ENCODE measurements at regions of chr16 and their contacts with region 1.

Region 1: DNA sequence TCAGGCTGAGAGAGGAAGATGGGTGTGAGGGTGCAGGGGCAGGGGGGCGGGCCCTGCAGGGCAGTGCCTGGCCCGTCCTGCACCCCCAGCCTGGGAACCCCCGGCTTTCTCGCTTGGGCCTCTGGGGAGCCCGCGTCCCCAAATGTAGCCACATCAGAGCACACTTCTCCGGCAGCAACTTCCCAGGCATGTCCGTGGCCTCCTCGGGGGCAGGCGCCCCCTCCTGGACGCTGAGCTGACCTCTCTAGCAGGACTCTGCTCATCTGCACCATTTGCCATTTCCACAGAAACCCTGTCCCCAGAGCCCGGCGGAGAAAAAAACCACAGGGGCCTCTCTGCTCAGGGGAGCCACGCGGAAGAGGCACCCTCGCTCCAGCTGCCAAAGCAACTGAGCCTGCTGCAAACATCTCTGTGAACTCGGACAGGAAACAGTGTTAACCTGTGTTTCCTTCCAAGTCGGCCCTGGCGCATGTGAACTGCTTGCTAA is 63.4 kb downstream of the KLHDC4 start:
- DNase-seq: peak; percentile 93
- H3K4me3 ChIP-seq: peak overlapping the region; percentile 36
- H3K27ac ChIP-seq: peak overlapping the region; percentile 99
- H3K4me1 ChIP-seq: peaks cover 68% of the 10 kb centered on the region
- CTCF ChIP-seq: peak; percentile 83

Region 2: GRCh38 chr16:87387942-87388817 is 314.2 kb before region 1 on chr16:
- CTCF ChIA-PET with region 1: no interaction called
- POLR2A ChIA-PET with region 1: no interaction called
- intact Hi-C with region 1: loop called (anchors 5 kb)
- DNase-seq: peak; percentile 97
- H3K4me3 ChIP-seq: peak overlapping the region; percentile 51
- H3K27ac ChIP-seq: peak overlapping the region; percentile 85
- H3K4me1 ChIP-seq: peaks cover 44% of the 10 kb centered on the region
- CTCF ChIP-seq: no peak

Region 3: DNA sequence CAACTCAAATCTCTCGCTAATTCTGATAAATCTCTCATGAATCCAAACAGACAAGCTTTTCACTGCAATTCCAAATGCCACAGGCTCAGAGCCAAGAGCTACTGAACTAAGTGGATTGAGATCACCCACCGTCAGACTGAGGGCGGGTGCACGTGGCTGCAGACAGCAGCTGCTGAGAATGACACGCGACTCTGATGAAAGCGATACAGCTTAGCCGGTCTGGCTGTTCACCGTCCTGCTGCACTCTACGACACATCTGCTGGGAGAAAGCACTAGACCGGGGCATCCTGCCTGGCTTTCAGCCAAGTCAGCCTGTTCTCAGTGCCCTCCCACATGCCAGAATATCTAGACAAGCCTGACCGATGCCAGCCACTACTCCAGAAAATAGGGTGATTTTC is 20.9 kb after region 1 on chr16:
- CTCF ChIA-PET with region 1: interaction called, 8 read pairs
- POLR2A ChIA-PET with region 1: interaction called, 12 read pairs
- intact Hi-C with region 1: loop called (anchors 1 kb)
- DNase-seq: peak; percentile 97
- H3K4me3 ChIP-seq: peak overlapping the region; percentile 30
- H3K27ac ChIP-seq: peak overlapping the region; percentile 94
- H3K4me1 ChIP-seq: peaks cover 55% of the 10 kb centered on the region
- CTCF ChIP-seq: no peak

Region 4: GRCh38 chr16:87765776-87766484 is 63.6 kb after region 1 on chr16 and contains the start of gene KLHDC4:
- CTCF ChIA-PET with region 1: no interaction called
- POLR2A ChIA-PET with region 1: interaction called, 6 read pairs
- intact Hi-C with region 1: loop called (anchors 2 kb)
- DNase-seq: peak; percentile 91
- H3K4me3 ChIP-seq: peak within 1 kb of the TSS; percentile 86
- H3K27ac ChIP-seq: peak within 1 kb of the TSS; percentile 75
- H3K4me1 ChIP-seq: peaks cover 62% of the 10 kb centered on the region
- CTCF ChIP-seq: no peak
- total RNA-seq, gene KLHDC4: 146 and 147 TPM in 2 replicates

Region 5: DNA sequence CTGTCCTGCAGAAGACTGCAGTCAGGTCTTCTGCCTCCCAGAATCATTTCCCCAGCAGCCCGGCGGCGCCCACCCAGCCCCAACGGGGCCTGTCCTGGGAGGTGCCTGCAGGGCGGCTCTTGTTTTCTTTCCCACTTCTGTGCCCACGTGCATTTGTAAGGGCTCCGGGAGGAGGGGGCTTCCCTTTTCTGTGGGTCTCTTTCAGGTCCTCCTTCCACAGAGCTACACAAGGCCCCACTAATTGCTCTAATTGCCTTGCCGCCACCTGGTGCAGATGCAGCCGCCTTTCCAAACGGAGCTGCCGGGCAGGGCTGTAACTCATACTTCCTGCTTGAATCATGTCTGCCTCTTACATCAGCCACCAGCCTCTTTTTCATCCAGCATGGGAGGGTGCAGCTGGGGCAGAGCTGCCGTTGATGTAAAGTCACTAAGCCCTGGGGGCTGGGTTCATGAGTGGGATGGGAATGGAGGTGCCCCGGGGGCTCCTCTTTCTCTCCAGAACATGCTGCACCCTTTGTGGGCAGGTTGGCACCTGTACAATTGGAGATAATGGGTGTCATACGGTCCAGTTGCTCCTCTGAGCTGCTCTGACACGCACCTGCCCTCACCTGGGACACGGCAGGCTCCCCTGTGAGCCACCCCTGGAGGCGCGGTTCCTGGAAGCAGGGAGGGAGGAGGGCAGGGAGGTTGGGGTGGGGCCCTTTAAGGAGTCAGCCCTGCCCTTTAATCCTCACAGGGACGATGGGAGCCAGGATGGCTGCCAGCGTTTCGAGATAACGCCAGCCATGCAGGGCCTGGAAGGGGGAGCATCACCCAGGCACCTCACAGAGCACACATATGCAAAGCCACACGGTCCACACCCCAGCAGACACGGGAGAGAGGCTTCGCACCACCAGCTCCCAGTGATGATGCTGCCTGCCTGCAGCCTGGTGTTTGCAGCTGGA is 104.5 kb after region 1 on chr16:
- CTCF ChIA-PET with region 1: no interaction called
- POLR2A ChIA-PET with region 1: no interaction called
- intact Hi-C with region 1: loop called (anchors 1 kb)
- DNase-seq: peak; percentile 95
- H3K4me3 ChIP-seq: peak overlapping the region; percentile 65
- H3K27ac ChIP-seq: peak overlapping the region; percentile 97
- H3K4me1 ChIP-seq: peaks cover 91% of the 10 kb centered on the region
- CTCF ChIP-seq: 0 out of 2 replicates have a peak, but pooled peaks have one; percentile 24

Region 6: DNA sequence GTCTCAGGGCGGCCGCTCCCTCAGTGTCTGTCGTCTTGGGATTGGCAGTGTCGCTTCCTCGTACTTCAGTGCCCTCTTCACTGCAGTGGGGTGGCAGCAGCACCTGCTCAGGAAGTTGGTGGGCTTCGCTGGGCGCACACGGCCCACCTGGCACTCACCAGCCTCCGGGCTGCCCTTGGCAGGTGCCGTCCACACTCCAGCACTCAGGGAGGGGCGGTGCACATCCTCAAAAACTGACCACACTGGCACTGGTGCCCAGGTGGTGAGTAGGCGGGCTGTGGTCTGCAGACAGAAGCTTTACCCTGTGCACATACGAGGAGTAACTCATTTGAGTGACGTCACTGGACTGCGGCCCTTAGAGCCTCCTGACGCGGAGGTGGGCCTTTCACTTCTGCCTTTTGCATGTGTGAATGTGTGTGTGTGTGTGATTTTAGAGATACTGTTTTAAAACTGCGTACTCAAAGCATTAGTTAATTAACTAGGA is 343.5 kb after region 1 on chr16:
- CTCF ChIA-PET with region 1: no interaction called
- POLR2A ChIA-PET with region 1: interaction called, 8 read pairs
- intact Hi-C with region 1: loop called (anchors 5 kb)
- DNase-seq: peak; percentile 92
- H3K4me3 ChIP-seq: peak overlapping the region; percentile 28
- H3K27ac ChIP-seq: peak overlapping the region; percentile 69
- H3K4me1 ChIP-seq: peaks cover 38% of the 10 kb centered on the region
- CTCF ChIP-seq: no peak

Region 7: DNA sequence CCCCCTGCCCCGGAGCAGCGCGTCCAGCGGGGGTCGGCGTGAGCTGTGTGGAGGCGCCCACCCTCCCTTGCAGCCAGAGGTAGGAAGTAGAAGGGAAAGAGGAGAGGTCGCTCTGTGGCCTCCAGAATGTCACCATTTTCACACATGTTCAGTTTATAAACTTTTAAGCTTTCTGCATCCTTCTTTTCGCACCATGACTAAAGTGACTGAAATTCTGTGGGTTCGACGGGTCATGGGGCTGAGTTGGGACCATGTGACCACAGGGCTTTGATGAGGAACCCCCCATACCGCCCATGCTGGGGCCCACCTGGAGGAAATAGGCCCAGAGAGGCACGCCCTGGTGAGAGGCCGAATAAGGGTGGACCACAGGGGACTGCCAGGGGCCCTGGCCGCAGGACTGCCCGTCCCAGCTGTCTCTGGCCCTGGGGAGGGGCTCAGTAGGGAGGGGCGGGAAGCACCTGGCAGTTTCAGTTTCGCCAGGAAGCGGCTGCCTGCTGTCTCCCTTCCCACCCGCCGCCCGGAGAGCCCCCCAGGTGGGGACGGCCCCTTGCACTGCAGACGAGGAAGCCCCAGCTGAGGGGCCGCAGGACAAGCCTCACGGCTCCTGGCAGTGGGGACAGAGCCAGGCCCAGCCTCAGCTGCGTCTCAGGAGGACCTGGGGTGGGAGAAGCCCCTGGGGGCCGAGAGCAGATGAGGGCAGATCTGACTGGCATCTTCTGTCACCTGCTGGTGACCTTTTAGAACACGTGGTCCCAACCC is 1265.6 kb after region 1 on chr16:
- CTCF ChIA-PET with region 1: no interaction called
- POLR2A ChIA-PET with region 1: no interaction called
- intact Hi-C with region 1: loop called (anchors 5 kb)
- DNase-seq: peak; percentile 94
- H3K4me3 ChIP-seq: peak overlapping the region; percentile 60
- H3K27ac ChIP-seq: peak overlapping the region; percentile 92
- H3K4me1 ChIP-seq: peaks cover 80% of the 10 kb centered on the region
- CTCF ChIP-seq: 0 out of 2 replicates have a peak, but pooled peaks have one; percentile 40